B cell (primary cell): ENCODE measurements at regions of chr1 and their contacts with region 1.

Region 1: DNA sequence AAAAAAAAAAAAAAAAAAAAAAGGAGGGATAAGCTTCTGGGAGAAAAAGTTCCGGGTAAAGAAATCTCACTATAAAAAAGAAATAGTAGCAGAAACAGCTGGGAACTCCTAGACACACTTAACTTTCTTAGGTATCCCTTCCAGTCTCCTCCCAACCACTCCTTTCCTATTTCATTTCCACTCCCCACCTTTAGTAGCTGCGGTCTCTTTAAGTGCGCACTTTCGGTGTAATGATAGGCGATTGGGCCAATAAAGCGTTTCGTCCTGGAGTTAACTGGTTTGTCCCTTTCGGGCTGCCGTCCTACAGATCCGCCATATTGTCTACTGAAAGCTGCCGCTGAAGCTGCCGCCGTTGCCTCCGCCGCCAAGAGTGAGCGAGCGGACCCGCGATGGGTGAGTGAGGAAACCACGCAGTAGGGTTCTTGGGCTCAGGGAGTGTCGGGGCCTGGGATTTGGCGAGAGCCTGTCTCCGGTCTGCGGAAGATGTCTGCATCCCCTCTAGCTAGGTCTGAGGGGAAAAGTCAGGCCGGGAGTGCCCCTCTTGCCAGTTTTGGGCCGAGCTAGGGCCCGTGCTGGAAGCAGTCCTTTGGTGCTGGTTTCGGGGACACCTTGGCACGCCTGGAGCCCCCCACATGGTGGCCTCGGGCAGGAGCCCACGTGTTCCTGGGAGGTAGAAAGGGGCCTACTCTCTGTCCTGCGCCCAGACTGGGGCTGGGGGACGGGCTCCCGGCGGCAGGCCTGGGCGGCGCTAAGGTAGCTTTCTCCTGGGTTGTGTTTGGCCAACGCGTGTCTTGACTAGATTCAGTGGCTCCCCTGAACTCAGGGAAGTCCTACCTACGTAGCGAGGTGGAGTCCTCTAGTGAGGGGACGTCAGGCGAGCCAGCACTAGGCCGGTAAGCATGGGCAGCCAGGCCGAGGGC is at the start of gene KPNA6:
- DNase-seq: peak; percentile 96
- ATAC-seq: peak; percentile 83
- H3K4me3 ChIP-seq: peak within 1 kb of the TSS; percentile 86 to 99 (median 93)
- H3K4me3 Mint-ChIP-seq: peak within 1 kb of the TSS; percentile 100
- H3K27ac ChIP-seq: peak within 1 kb of the TSS; percentile 86 to 88
- H3K27ac Mint-ChIP-seq: peak within 1 kb of the TSS; percentile 100
- H3K4me1 ChIP-seq: peaks cover 33 to 44% of the 10 kb centered on the region in 2 donors
- H3K4me1 Mint-ChIP-seq: peaks cover 44% of the 10 kb centered on the region
- H3K27me3 ChIP-seq: no peaks in the 10 kb centered on the region
- H3K27me3 Mint-ChIP-seq: no peaks in the 10 kb centered on the region
- CTCF ChIP-seq: no peak
- total RNA-seq, gene KPNA6: 49.9 and 54.8 TPM in 2 replicates

Region 2: DNA sequence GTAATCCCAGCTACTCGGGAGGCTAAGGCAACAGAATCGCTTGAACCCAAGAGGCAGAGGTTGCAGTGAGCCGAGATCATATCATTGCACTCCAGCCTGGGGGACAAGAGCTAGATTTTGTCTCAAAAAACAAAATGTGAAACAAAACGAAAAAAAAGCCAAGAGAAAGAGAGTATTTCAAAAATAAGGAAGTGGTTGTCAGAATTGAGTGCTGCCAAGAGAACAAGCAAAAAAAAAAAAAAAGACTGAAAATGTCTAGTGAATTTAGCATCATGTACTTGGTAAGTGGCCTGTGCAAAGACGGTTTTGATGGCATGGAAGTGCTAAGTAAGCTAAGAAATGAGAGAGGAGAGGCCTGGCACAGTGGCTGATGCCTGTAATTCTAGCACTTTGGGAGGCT is 14.1 kb after region 1 on chr1:
- CTCF ChIA-PET with region 1: interaction called, 26 read pairs
- POLR2A ChIA-PET with region 1: interaction called, 11 read pairs
- intact Hi-C with region 1: no loop called
- DNase-seq: peak; percentile 52
- ATAC-seq: peak; percentile 39
- H3K4me3 ChIP-seq: peak overlapping the region in 2 of 5 experiments; percentile 8 to 48
- H3K4me3 Mint-ChIP-seq: peak overlapping the region; percentile 47
- H3K27ac ChIP-seq: peak overlapping the region; percentile 11 to 66
- H3K27ac Mint-ChIP-seq: peak overlapping the region; percentile 43
- H3K4me1 ChIP-seq: peaks cover 31 to 34% of the 10 kb centered on the region in 2 donors
- H3K4me1 Mint-ChIP-seq: peaks cover 49% of the 10 kb centered on the region
- H3K27me3 ChIP-seq: no peaks in the 10 kb centered on the region
- H3K27me3 Mint-ChIP-seq: no peaks in the 10 kb centered on the region
- CTCF ChIP-seq: no peak

Region 3: DNA sequence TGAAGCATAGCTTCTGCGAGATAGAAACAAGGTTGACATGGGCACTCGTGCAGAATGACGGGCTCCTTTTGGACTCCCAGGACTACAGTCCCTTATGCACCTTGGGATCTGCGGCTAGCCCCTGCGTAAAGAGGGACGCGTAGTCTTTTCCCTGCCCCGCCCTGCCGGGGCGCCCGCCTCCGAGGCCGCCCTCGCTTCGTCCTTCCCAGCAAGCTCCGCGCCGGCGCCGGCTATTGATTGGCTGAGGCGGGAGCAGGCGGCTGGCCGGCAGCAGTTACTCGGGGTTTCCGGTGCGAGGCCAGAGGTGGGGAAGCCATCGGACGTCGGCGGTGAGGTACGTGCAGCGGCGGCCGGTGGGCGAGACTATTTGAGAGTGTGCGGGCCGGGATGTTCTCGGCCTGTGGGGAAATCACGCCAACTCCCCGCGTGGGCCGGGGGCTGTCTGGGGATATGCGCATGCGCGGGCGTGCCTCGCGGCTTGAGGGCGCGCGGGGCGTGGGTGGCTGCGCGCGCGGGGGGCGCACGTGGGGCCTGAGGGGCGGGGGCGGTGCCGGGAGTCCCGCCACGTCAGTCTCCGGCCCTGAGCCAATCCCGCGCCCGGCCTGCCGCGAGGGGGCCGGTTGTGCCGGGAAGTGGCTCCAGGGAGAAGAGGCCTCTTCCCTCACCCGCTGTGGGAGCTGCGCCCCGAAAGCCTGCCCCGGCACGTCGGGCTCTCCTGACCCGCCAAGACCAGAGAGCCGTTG is 71.6 kb after region 1 on chr1 and contains the start of gene TXLNA:
- CTCF ChIA-PET with region 1: interaction called, 3 read pairs
- POLR2A ChIA-PET with region 1: interaction called, 9 read pairs
- intact Hi-C with region 1: loop called (anchors 1 kb)
- DNase-seq: peak; percentile 94
- ATAC-seq: peak; percentile 90
- H3K4me3 ChIP-seq: peak within 1 kb of the TSS; percentile 71 to 92 (median 76)
- H3K4me3 Mint-ChIP-seq: peak within 1 kb of the TSS; percentile 96
- H3K27ac ChIP-seq: peak within 1 kb of the TSS; percentile 76 to 90
- H3K27ac Mint-ChIP-seq: peak within 1 kb of the TSS; percentile 99
- H3K4me1 ChIP-seq: peaks cover 21 to 31% of the 10 kb centered on the region in 2 donors
- H3K4me1 Mint-ChIP-seq: peaks cover 35% of the 10 kb centered on the region
- H3K27me3 ChIP-seq: no peaks in the 10 kb centered on the region
- H3K27me3 Mint-ChIP-seq: no peaks in the 10 kb centered on the region
- CTCF ChIP-seq: no peak
- total RNA-seq, gene TXLNA: 38.3 and 38.4 TPM in 2 replicates

Region 4: GRCh38 chr1:32291708-32292492 is 183.9 kb after region 1 on chr1 and contains the start of gene HDAC1:
- CTCF ChIA-PET with region 1: interaction called, 5 read pairs
- POLR2A ChIA-PET with region 1: interaction called, 4 read pairs
- intact Hi-C with region 1: loop called (anchors 1 kb)
- DNase-seq: peak; percentile 96
- ATAC-seq: peak; percentile 98
- H3K4me3 ChIP-seq: peak within 1 kb of the TSS; percentile 77 to 98 (median 88)
- H3K4me3 Mint-ChIP-seq: peak within 1 kb of the TSS; percentile 100
- H3K27ac ChIP-seq: peak within 1 kb of the TSS; percentile 81 to 87
- H3K27ac Mint-ChIP-seq: peak within 1 kb of the TSS; percentile 99
- H3K4me1 ChIP-seq: peaks cover 41 to 42% of the 10 kb centered on the region in 2 donors
- H3K4me1 Mint-ChIP-seq: peaks cover 39% of the 10 kb centered on the region
- H3K27me3 ChIP-seq: no peaks in the 10 kb centered on the region
- H3K27me3 Mint-ChIP-seq: no peaks in the 10 kb centered on the region
- CTCF ChIP-seq: peak; percentile 1
- total RNA-seq, gene HDAC1: 200 and 205 TPM in 2 replicates